ENCODE measurements at regions of chr3 and their contacts with region 1.

Region 1: DNA sequence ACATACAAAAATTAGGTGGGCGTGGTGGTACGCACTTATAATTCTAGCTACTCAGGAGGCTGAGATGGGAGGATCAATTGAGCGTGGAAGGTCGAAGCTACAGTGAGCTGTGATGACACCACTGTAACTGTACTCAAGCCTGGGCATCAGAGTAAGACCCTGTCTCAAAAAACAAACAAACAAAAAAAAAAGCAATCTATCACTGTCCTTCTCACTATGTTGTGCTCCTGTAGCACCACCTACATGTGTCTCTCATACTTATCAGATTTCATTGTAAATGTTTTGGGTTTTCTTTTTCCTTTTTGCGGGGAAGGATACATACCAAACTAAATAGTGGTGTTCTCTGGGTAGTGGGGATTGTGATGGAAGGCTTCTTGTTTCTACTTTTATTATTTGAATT is 14.8 kb downstream of the FANCD2 start:
- DNase-seq: no peak
- H3K4me3 ChIP-seq: no peak overlapping the region
- H3K27ac ChIP-seq: no peak overlapping the region
- H3K4me1 ChIP-seq: no peaks in the 10 kb centered on the region
- H3K27me3 ChIP-seq: no peaks in the 10 kb centered on the region
- CTCF ChIP-seq: no peak

Region 2: GRCh38 chr3:11878840-11879239 is 1837.8 kb after region 1 on chr3:
- intact Hi-C with region 1: loop called (anchors 10 kb)
- DNase-seq: no peak
- H3K4me3 ChIP-seq: no peak overlapping the region
- H3K27ac ChIP-seq: no peak overlapping the region
- H3K4me1 ChIP-seq: no peaks in the 10 kb centered on the region
- H3K27me3 ChIP-seq: no peaks in the 10 kb centered on the region
- CTCF ChIP-seq: no peak